CD4-positive, alpha-beta memory T cell (primary cell): ENCODE measurements at regions of chr3 and their contacts with region 1.

Region 1: GRCh38 chr3:94004301-94004910 is 24.0 kb downstream of the STX19 start:
- DNase-seq: peak in 4 of 5 donors; percentile 40 to 57 (median 52)
- H3K4me3 ChIP-seq: no peak overlapping the region
- H3K4me3 Mint-ChIP-seq: peak overlapping the region; percentile 68 to 90 (median 82)
- H3K27ac ChIP-seq: no peak overlapping the region
- H3K27ac Mint-ChIP-seq: peak overlapping the region in 5 of 7 donors; percentile 67 to 89 (median 82)
- H3K4me1 ChIP-seq: peaks cover 5% of the 10 kb centered on the region
- H3K4me1 Mint-ChIP-seq: peaks cover 0 to 5% (median 2%) of the 10 kb centered on the region in 4 donors
- H3K27me3 ChIP-seq: no peaks in the 10 kb centered on the region
- H3K27me3 Mint-ChIP-seq: no peaks in the 10 kb centered on the region

Region 2: GRCh38 chr3:93979833-93980676 is 24.4 kb before region 1 on chr3 and contains the start of gene ARL13B:
- CTCF ChIA-PET with region 1: interaction called, 10 read pairs
- POLR2A ChIA-PET with region 1: no interaction called
- intact Hi-C with region 1: no loop called
- DNase-seq: peak; percentile 91 to 97 (median 94)
- H3K4me3 ChIP-seq: peak within 1 kb of the TSS; percentile 78 to 98
- H3K4me3 Mint-ChIP-seq: peak within 1 kb of the TSS; percentile 80 to 94 (median 90)
- H3K27ac ChIP-seq: peak within 1 kb of the TSS; percentile 93
- H3K27ac Mint-ChIP-seq: peak within 1 kb of the TSS; percentile 92 to 97 (median 94)
- H3K4me1 ChIP-seq: peaks cover 16% of the 10 kb centered on the region
- H3K4me1 Mint-ChIP-seq: peaks cover 11 to 26% (median 23%) of the 10 kb centered on the region in 4 donors
- H3K27me3 ChIP-seq: no peaks in the 10 kb centered on the region
- H3K27me3 Mint-ChIP-seq: no peaks in the 10 kb centered on the region
- total RNA-seq, gene ARL13B: 11.7 to 12.0 TPM

Region 3: GRCh38 chr3:94015025-94015424 is 10.6 kb after region 1 on chr3:
- CTCF ChIA-PET with region 1: interaction called, 11 read pairs
- POLR2A ChIA-PET with region 1: no interaction called
- intact Hi-C with region 1: no loop called
- DNase-seq: no peak
- H3K4me3 ChIP-seq: no peak overlapping the region
- H3K4me3 Mint-ChIP-seq: no peak overlapping the region
- H3K27ac ChIP-seq: no peak overlapping the region
- H3K27ac Mint-ChIP-seq: peak overlapping the region in 1 of 7 donors; percentile 22
- H3K4me1 ChIP-seq: no peaks in the 10 kb centered on the region
- H3K4me1 Mint-ChIP-seq: peaks cover 9 to 18% (median 11%) of the 10 kb centered on the region in 4 donors
- H3K27me3 ChIP-seq: no peaks in the 10 kb centered on the region
- H3K27me3 Mint-ChIP-seq: no peaks in the 10 kb centered on the region

Region 4: GRCh38 chr3:94062431-94063404 is 58.3 kb after region 1 on chr3 and contains the starts of genes DHFR2 and NSUN3:
- CTCF ChIA-PET with region 1: interaction called, 71 read pairs
- POLR2A ChIA-PET with region 1: interaction called, 4 read pairs
- intact Hi-C with region 1: no loop called
- DNase-seq: peak; percentile 91 to 94 (median 92)
- H3K4me3 ChIP-seq: peak within 1 kb of the TSS; percentile 97
- H3K4me3 Mint-ChIP-seq: peak within 1 kb of the TSS; percentile 97 to 100 (median 98)
- H3K27ac ChIP-seq: peak within 1 kb of the TSS; percentile 95
- H3K27ac Mint-ChIP-seq: peak within 1 kb of the TSS; percentile 99 to 100 (median 100)
- H3K4me1 ChIP-seq: peaks cover 45% of the 10 kb centered on the region
- H3K4me1 Mint-ChIP-seq: peaks cover 32 to 62% (median 47%) of the 10 kb centered on the region in 4 donors
- H3K27me3 ChIP-seq: no peaks in the 10 kb centered on the region
- H3K27me3 Mint-ChIP-seq: no peaks in the 10 kb centered on the region
- total RNA-seq, gene DHFR2: 15.9 TPM
- total RNA-seq, gene NSUN3: 20.4 to 23.1 TPM

Region 5: GRCh38 chr3:94069194-94069813 is 64.9 kb after region 1 on chr3:
- CTCF ChIA-PET with region 1: interaction called, 71 read pairs
- POLR2A ChIA-PET with region 1: no interaction called
- intact Hi-C with region 1: loop called (anchors 1 kb)
- DNase-seq: peak in 3 of 5 donors; percentile 13 to 34 (median 27)
- H3K4me3 ChIP-seq: no peak overlapping the region
- H3K4me3 Mint-ChIP-seq: no peak overlapping the region
- H3K27ac ChIP-seq: no peak overlapping the region
- H3K27ac Mint-ChIP-seq: peak overlapping the region in 3 of 7 donors; percentile 6 to 36 (median 30)
- H3K4me1 ChIP-seq: peaks cover 47% of the 10 kb centered on the region
- H3K4me1 Mint-ChIP-seq: peaks cover 38 to 73% (median 60%) of the 10 kb centered on the region in 4 donors
- H3K27me3 ChIP-seq: no peaks in the 10 kb centered on the region
- H3K27me3 Mint-ChIP-seq: no peaks in the 10 kb centered on the region

Region 6: GRCh38 chr3:94249585-94249984 is 245.2 kb after region 1 on chr3:
- CTCF ChIA-PET with region 1: interaction called, 3 read pairs
- POLR2A ChIA-PET with region 1: no interaction called
- intact Hi-C with region 1: loop called (anchors 5 kb)
- DNase-seq: peak in 4 of 5 donors; percentile 28 to 36 (median 32)
- H3K4me3 ChIP-seq: no peak overlapping the region
- H3K4me3 Mint-ChIP-seq: no peak overlapping the region
- H3K27ac ChIP-seq: no peak overlapping the region
- H3K27ac Mint-ChIP-seq: no peak overlapping the region
- H3K4me1 ChIP-seq: no peaks in the 10 kb centered on the region
- H3K4me1 Mint-ChIP-seq: no peaks in the 10 kb centered on the region
- H3K27me3 ChIP-seq: no peaks in the 10 kb centered on the region
- H3K27me3 Mint-ChIP-seq: peaks cover 13 to 17% of the 10 kb centered on the region in 2 donors